PC-3 (cell line): ENCODE measurements at regions of chr1 and their contacts with region 1.

Region 1: GRCh38 chr1:156625436-156626078 is 6.3 kb downstream of the HAPLN2 start:
- DNase-seq: peak; percentile 68
- ATAC-seq: peak; percentile 60
- H3K4me3 ChIP-seq: peak overlapping the region; percentile 36; the same call in 1 of the 2 replicates
- H3K27ac ChIP-seq: no peak overlapping the region
- H3K4me1 ChIP-seq: 0 out of 2 replicates have a peak, but pooled peaks cover 6% of the 10 kb centered on the region
- H3K27me3 ChIP-seq: peaks cover 26% of the 10 kb centered on the region
- CTCF ChIP-seq: peak; percentile 94

Region 2: DNA sequence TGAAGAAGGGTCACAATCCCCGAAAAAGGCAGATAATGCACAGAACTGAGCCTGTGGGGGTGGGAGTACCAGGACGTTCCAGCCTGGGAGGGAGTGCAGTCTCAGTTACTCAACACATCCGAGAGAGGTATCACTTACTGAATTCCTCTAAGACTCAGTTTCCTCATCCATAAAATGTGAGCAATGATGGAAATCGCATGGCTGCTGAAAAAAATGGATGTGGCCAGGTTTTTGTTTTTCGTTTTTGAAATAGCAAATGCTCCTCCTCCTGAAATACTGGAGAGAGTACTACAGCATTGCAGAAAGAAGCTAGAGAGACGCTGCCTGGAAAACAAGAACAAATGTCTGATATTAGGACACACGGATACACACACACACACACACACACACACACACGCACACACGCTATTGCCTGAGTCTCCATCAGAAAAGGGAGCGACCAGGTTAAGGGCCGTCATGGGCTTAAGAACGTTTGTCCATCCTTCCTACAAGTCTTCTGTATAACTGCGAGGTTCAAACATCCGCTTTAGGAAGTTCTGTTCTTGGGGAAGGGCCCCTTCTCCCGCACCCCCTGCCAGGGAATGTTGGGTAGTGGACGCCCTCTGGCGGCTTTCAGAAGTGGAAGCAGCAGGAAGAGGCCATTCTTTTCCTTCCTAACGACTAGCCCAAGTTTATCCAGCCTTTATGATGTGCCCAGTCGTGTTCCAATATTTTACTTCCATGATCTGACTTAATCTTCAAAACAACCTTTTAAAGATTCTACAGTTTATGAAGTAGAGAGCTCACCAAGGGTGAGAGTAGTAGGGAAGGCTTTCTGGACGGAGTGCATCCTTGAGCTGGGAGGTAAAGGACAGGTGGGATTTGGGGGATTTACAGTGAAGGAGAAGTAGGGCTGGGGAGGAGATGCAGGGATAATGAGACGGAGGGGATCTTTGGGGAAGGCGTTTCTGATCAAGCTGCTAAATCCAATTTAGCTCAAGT is 52.3 kb after region 1 on chr1:
- CTCF ChIA-PET with region 1: interaction called, 4 read pairs
- POLR2A ChIA-PET with region 1: no interaction called
- intact Hi-C with region 1: loop called (anchors 1 kb)
- DNase-seq: peak; percentile 75
- ATAC-seq: peak; percentile 53
- H3K4me3 ChIP-seq: peak overlapping the region; percentile 64
- H3K27ac ChIP-seq: no peak overlapping the region
- H3K4me1 ChIP-seq: peaks cover 28% of the 10 kb centered on the region
- H3K27me3 ChIP-seq: no peaks in the 10 kb centered on the region
- CTCF ChIP-seq: peak; percentile 99